ENCODE measurements at regions of chr19 and their contacts with region 1.

Region 1: GRCh38 chr19:24054549-24054935 is 32.4 kb upstream of the ZNF254 start:
- DNase-seq: peak; percentile 88
- H3K4me3 Mint-ChIP-seq: no peak overlapping the region
- H3K27ac Mint-ChIP-seq: peak overlapping the region; percentile 33
- H3K4me1 Mint-ChIP-seq: peaks cover 32% of the 10 kb centered on the region
- H3K27me3 Mint-ChIP-seq: no peaks in the 10 kb centered on the region
- CTCF ChIP-seq: no peak

Region 2: DNA sequence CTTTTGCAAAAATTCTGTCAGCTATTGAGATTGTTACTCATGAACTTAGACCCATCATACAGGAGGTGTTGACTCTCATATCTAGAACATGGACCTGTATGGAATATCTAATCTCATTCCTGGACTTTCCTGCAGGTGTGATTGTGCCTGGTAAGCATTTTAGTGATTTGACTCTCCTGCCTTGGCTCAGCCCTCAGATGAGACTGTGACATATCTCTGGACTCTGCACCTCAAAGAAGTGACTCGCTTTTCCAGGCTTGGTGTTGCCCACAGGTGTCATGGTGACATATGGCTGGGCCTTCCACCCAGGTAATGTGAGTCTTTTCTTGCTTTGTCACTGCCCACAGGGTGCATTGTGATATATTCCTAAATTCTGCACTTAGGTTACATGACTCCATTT is 157.6 kb before region 1 on chr19:
- CTCF ChIA-PET with region 1: no interaction called
- POLR2A ChIA-PET with region 1: no interaction called
- intact Hi-C with region 1: no loop called
- DNase-seq: no peak
- H3K4me3 Mint-ChIP-seq: no peak overlapping the region
- H3K27ac Mint-ChIP-seq: no peak overlapping the region
- H3K4me1 Mint-ChIP-seq: no peaks in the 10 kb centered on the region
- H3K27me3 Mint-ChIP-seq: no peaks in the 10 kb centered on the region
- CTCF ChIP-seq: no peak

Region 3: DNA sequence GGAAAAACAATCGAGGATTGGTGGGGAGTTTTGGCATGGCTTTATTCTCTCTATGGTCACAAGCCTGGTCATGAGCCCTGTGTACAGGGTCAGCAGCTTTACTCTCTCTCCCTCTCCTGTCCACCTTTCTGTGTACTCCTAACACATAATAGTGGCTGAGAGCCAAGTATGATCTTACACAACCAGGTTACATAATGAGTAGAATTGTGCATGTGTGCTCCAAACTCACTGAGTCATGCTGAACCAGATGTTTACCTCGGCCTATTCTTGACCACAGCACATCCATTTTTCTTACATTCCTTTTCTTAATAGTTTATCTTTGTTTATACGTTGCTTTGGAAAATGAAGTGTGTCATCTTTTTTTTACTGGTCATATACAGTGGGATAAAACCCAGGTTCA is 85.6 kb after region 1 on chr19:
- CTCF ChIA-PET with region 1: no interaction called
- POLR2A ChIA-PET with region 1: interaction called, 5 read pairs
- intact Hi-C with region 1: loop called (anchors 10 kb)
- DNase-seq: peak; percentile 80
- H3K4me3 Mint-ChIP-seq: no peak overlapping the region
- H3K27ac Mint-ChIP-seq: no peak overlapping the region
- H3K4me1 Mint-ChIP-seq: no peaks in the 10 kb centered on the region
- H3K27me3 Mint-ChIP-seq: no peaks in the 10 kb centered on the region
- CTCF ChIP-seq: no peak

Measured in MCF 10A (cell line).